ENCODE measurements at regions of chr1 and their contacts with region 1.

Region 1: GRCh38 chr1:24688621-24689195 is 45.6 kb downstream of the SRRM1 start:
- DNase-seq: peak; percentile 64 to 73 (median 71)
- H3K4me3 ChIP-seq: no peak overlapping the region
- H3K4me3 Mint-ChIP-seq: no peak overlapping the region
- H3K27ac ChIP-seq: no peak overlapping the region
- H3K27ac Mint-ChIP-seq: peak overlapping the region in 3 of 7 donors; percentile 24 to 58 (median 56)
- H3K4me1 ChIP-seq: peaks cover 5 to 10% of the 10 kb centered on the region in 2 donors
- H3K4me1 Mint-ChIP-seq: peaks cover 8% of the 10 kb centered on the region
- H3K27me3 ChIP-seq: no peaks in the 10 kb centered on the region
- H3K27me3 Mint-ChIP-seq: peaks cover 2 to 5% (median 3%) of the 10 kb centered on the region in 3 donors
- CTCF ChIP-seq: peak; percentile 91

Region 2: GRCh38 chr1:24830680-24831272 is 142.1 kb after region 1 on chr1:
- intact Hi-C with region 1: loop called (anchors 2 kb)
- DNase-seq: peak; percentile 41 to 73 (median 57)
- H3K4me3 ChIP-seq: no peak overlapping the region
- H3K4me3 Mint-ChIP-seq: no peak overlapping the region
- H3K27ac ChIP-seq: no peak overlapping the region
- H3K27ac Mint-ChIP-seq: no peak overlapping the region
- H3K4me1 ChIP-seq: no peaks in the 10 kb centered on the region
- H3K4me1 Mint-ChIP-seq: peaks cover 4% of the 10 kb centered on the region
- H3K27me3 ChIP-seq: no peaks in the 10 kb centered on the region
- H3K27me3 Mint-ChIP-seq: no peaks in the 10 kb centered on the region
- CTCF ChIP-seq: peak; percentile 94